ENCODE measurements at regions of chr2 and their contacts with region 1.

Region 1: DNA sequence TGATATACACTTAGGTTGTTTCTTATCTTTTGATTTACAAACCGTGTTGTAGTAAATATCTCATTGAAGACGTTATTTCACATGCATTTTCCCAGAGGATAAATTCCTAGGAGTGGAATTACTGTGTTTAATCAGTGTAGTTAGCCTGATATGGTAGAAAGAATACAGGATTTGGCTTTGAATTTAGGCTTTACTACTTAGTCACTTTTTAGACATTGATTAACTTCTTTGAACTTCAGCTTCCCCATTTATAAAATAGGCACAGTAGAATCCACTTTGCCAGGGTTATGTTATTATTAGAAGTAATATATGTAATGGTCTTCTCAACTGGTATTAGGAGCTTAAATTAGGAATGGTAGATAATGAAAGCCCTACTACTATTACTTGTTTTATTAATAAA is 27.4 kb downstream of the PSMD14 start:
- DNase-seq: no peak
- H3K4me3 Mint-ChIP-seq: no peak overlapping the region
- H3K27ac Mint-ChIP-seq: no peak overlapping the region
- H3K4me1 Mint-ChIP-seq: peaks cover 4% of the 10 kb centered on the region
- H3K27me3 Mint-ChIP-seq: no peaks in the 10 kb centered on the region
- CTCF ChIP-seq: no peak

Region 2: GRCh38 chr2:160306985-160307384 is 1028.6 kb before region 1 on chr2:
- CTCF ChIA-PET with region 1: no interaction called
- POLR2A ChIA-PET with region 1: no interaction called
- intact Hi-C with region 1: no loop called
- DNase-seq: no peak
- H3K4me3 Mint-ChIP-seq: no peak overlapping the region
- H3K27ac Mint-ChIP-seq: no peak overlapping the region
- H3K4me1 Mint-ChIP-seq: peaks cover 24% of the 10 kb centered on the region
- H3K27me3 Mint-ChIP-seq: no peaks in the 10 kb centered on the region
- CTCF ChIP-seq: no peak

Region 3: GRCh38 chr2:161208527-161209139 is 127.0 kb before region 1 on chr2:
- CTCF ChIA-PET with region 1: no interaction called
- POLR2A ChIA-PET with region 1: no interaction called
- intact Hi-C with region 1: no loop called
- DNase-seq: peak; percentile 83
- H3K4me3 Mint-ChIP-seq: no peak overlapping the region
- H3K27ac Mint-ChIP-seq: no peak overlapping the region
- H3K4me1 Mint-ChIP-seq: peaks cover 12% of the 10 kb centered on the region
- H3K27me3 Mint-ChIP-seq: no peaks in the 10 kb centered on the region
- CTCF ChIP-seq: no peak

Region 4: GRCh38 chr2:161308178-161308955 is 27.3 kb before region 1 on chr2 and contains the start of gene PSMD14:
- CTCF ChIA-PET with region 1: no interaction called
- POLR2A ChIA-PET with region 1: interaction called, 11 read pairs
- intact Hi-C with region 1: no loop called
- DNase-seq: peak; percentile 97
- H3K4me3 Mint-ChIP-seq: peak within 1 kb of the TSS; percentile 91
- H3K27ac Mint-ChIP-seq: peak within 1 kb of the TSS; percentile 97
- H3K4me1 Mint-ChIP-seq: peaks cover 14% of the 10 kb centered on the region
- H3K27me3 Mint-ChIP-seq: no peaks in the 10 kb centered on the region
- CTCF ChIP-seq: no peak
- total RNA-seq, gene PSMD14: 130 and 135 TPM in 2 replicates